Calu3 (cell line): ENCODE measurements at regions of chr7 and their contacts with region 1.

Region 1: DNA sequence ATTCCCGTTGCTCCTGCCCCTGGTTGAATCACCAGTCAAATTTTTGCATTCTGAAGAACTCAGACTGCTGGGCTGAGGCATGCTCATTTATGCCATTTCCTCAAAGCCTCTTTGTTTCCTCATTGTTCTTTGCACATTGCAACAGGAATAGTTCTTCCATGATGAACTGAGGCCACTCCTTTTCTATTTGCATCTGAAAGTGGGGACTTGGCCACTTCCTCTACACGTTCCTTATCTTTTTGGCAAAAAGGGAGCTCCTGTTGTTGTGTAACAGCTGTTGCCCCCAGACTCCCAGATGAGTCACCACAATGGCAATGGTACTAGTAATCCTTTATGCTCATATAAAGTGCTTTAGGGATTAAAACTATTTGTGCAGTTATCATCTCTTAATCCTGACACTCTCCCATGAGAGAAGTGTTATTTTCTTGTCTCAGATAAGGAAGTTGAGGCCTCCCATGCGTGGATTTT is 20.1 kb upstream of the ITPRID1 start:
- DNase-seq: peak; percentile 87
- H3K4me3 Mint-ChIP-seq: peak overlapping the region; percentile 16
- H3K27ac Mint-ChIP-seq: peak overlapping the region; percentile 95
- H3K4me1 Mint-ChIP-seq: peaks cover 78% of the 10 kb centered on the region
- H3K27me3 Mint-ChIP-seq: no peaks in the 10 kb centered on the region
- CTCF ChIP-seq: no peak

Region 2: GRCh38 chr7:31464601-31465000 is 29.1 kb before region 1 on chr7:
- CTCF ChIA-PET with region 1: interaction called, 3 read pairs
- intact Hi-C with region 1: loop called (anchors 1 kb)
- DNase-seq: peak; percentile 54
- H3K4me3 Mint-ChIP-seq: peak overlapping the region; percentile 24
- H3K27ac Mint-ChIP-seq: peak overlapping the region; percentile 81
- H3K4me1 Mint-ChIP-seq: peaks cover 54% of the 10 kb centered on the region
- H3K27me3 Mint-ChIP-seq: no peaks in the 10 kb centered on the region
- CTCF ChIP-seq: no peak

Region 3: GRCh38 chr7:31539676-31540075 is 45.9 kb after region 1 on chr7:
- CTCF ChIA-PET with region 1: no interaction called
- intact Hi-C with region 1: loop called (anchors 1 kb)
- DNase-seq: no peak
- H3K4me3 Mint-ChIP-seq: no peak overlapping the region
- H3K27ac Mint-ChIP-seq: peak overlapping the region; percentile 48
- H3K4me1 Mint-ChIP-seq: peaks cover 47% of the 10 kb centered on the region
- H3K27me3 Mint-ChIP-seq: no peaks in the 10 kb centered on the region
- CTCF ChIP-seq: no peak

Region 4: DNA sequence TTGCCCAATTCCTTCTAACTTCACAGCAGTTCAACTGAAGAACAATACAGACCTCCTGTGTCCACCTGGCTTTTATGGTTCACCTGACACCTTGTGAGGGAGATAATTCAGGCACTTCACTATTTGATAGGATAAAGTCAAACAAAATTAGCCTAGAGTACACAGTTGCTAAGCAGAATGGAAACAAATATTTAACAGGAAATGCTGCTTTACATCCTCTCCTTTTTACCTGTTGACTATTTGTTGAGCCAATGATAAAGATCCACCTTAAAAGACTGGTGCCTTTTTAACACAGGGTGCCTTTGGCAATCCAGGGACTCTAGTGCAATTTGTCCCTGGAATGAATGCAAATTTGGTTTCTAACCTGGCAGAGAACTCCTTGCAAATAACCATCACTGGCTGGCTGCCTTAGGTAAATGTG is 59.9 kb after region 1 on chr7:
- CTCF ChIA-PET with region 1: interaction called, 3 read pairs
- intact Hi-C with region 1: loop called (anchors 1 kb)
- DNase-seq: no peak
- H3K4me3 Mint-ChIP-seq: no peak overlapping the region
- H3K27ac Mint-ChIP-seq: peak overlapping the region; percentile 71
- H3K4me1 Mint-ChIP-seq: peaks cover 22% of the 10 kb centered on the region
- H3K27me3 Mint-ChIP-seq: no peaks in the 10 kb centered on the region
- CTCF ChIP-seq: no peak

Region 5: DNA sequence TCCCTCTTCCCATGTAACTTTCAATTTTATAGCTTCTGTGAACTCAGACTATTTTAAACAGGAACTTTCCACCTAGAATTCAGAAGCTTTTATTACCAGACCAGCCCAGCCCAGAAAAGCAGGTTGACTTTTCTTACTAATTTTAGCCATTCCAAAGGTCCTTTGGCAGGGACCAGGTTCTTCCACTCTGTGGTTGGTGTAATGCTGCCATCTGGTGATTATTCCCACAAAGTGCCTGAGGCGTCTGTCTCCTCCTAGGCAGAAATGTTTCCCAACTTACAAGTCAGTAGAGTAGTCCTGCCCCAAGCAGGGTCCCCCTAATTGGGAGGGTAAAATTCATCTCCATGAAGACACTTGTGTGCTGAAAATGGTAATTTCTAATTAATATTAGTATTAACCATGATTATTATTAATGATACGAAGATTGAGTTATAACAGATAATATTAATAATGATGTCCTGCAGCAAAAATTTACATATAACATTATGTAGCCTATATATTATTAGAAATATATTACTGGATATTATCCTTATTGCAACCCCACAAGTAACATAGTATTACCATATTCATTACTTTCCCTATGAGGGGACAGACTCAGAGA is 140.2 kb after region 1 on chr7:
- CTCF ChIA-PET with region 1: interaction called, 20 read pairs
- intact Hi-C with region 1: loop called (anchors 1 kb)
- DNase-seq: peak; percentile 83
- H3K4me3 Mint-ChIP-seq: no peak overlapping the region
- H3K27ac Mint-ChIP-seq: peak overlapping the region; percentile 44
- H3K4me1 Mint-ChIP-seq: peaks cover 28% of the 10 kb centered on the region
- H3K27me3 Mint-ChIP-seq: no peaks in the 10 kb centered on the region
- CTCF ChIP-seq: peak; percentile 92